Calu3 (cell line): ENCODE measurements at regions of chr10 and their contacts with region 1.

Region 1: DNA sequence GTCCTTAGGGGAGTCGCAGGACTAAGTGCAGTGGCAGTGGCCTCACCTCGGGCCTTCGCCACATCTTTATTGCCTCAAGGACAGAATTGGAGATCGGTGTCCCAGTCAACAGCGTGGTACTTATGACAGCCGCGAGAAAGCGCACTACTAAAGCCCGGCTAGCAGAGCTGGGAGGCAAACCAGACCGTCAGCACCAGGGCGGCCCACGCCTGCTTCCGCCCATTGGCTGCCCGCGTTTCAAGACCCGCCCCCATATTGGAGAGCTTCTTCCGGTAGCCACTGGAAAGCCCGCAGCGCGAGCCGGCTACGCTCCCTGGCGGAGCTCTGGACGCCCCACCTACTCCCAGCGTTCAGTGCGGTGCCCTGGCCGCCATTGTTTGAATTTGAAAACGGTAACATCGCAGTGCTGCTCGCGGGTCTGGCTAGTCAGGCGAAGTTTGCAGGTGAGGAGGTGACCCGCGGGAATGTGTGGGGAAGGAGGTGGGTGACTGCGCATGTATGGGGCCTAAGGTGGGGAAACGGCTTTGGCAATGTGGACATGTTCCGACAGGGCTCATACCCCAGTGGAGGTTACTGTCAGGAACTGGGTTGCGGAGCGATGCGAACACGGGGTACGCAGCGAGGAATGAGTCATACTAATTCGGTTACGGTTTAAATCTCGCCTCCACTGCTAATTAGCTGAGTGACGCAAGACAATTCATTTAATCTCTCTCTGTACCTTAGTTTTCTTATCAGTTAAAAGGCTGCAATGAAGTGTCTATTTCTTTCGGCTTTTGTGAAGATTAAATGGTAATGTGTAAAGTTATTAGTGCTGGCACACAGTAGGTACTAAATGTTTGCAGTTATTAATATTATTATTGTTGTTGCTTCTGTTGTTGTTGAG is at the start of gene KIF20B:
- DNase-seq: peak; percentile 92
- H3K4me3 Mint-ChIP-seq: peak within 1 kb of the TSS; percentile 94
- H3K27ac Mint-ChIP-seq: peak within 1 kb of the TSS; percentile 95
- H3K4me1 Mint-ChIP-seq: peaks cover 24% of the 10 kb centered on the region
- H3K27me3 Mint-ChIP-seq: no peaks in the 10 kb centered on the region
- CTCF ChIP-seq: no peak
- total RNA-seq, gene KIF20B: 38.4 and 39.9 TPM in 2 replicates

Region 2: GRCh38 chr10:89540420-89540949 is 161.0 kb before region 1 on chr10:
- CTCF ChIA-PET with region 1: no interaction called
- intact Hi-C with region 1: no loop called
- DNase-seq: no peak
- H3K4me3 Mint-ChIP-seq: no peak overlapping the region
- H3K27ac Mint-ChIP-seq: no peak overlapping the region
- H3K4me1 Mint-ChIP-seq: no peaks in the 10 kb centered on the region
- H3K27me3 Mint-ChIP-seq: peaks cover 9% of the 10 kb centered on the region
- CTCF ChIP-seq: no peak

Region 3: DNA sequence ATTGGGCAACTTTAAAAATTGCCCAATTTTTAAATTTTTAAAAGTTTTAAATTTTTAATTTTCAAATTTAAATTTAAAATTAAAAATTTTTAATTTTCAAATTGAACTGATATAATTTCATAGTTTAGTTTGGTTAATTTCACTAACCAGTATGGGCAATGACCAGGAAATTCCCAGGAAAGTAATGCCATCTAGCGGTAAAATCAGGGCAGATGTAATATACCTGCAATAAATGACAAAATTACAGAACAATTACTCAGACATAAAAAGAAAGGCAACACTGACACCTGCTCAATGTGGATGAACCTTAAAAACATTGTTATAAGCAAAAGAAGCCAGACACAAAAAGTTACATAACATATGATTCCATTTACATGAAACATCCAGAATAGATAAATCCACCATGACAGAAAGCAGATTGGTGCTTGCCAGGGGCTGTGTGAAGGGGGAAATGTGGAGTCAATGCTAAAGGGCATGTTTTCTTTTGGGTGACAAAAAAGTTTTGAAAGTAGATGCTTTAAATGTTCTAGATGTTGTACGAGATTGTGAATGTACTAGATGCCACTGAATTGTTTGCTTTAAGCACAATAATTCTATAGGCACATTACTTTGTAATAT is 137.5 kb before region 1 on chr10:
- CTCF ChIA-PET with region 1: no interaction called
- intact Hi-C with region 1: loop called (anchors 5 kb)
- DNase-seq: peak; percentile 26
- H3K4me3 Mint-ChIP-seq: no peak overlapping the region
- H3K27ac Mint-ChIP-seq: no peak overlapping the region
- H3K4me1 Mint-ChIP-seq: no peaks in the 10 kb centered on the region
- H3K27me3 Mint-ChIP-seq: no peaks in the 10 kb centered on the region
- CTCF ChIP-seq: peak; percentile 18

Region 4: DNA sequence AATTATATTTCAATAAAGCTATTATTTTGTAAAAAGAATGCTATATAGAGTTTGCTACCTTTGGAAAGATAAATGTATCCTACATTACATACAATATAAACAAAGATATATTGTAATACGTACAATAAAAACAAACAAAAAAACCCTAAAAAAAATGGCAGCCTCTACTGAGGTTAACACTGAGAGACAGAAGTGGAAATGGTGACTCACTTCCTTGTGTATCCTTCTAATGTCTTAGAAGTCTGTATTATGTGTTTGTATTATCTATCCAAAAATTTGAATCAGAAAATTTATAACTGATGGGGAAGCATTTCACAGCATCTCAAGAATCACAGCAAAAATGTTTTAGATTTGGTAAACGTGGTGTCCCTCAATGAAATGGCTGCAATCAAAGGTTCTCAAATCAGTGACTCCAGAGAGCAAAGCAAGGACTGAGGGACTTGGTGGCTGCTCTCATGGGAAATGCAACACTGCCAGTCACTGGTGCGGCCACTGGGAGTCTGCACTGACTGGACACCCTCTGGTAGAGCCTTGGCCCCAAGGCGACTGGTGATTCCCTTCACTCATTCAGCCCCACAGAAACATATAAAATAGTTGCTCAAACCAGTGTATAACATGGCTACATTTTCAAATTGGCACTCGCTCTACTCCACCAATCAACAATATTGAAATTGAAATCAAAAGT is 110.2 kb before region 1 on chr10:
- CTCF ChIA-PET with region 1: no interaction called
- intact Hi-C with region 1: no loop called
- DNase-seq: no peak
- H3K4me3 Mint-ChIP-seq: no peak overlapping the region
- H3K27ac Mint-ChIP-seq: no peak overlapping the region
- H3K4me1 Mint-ChIP-seq: no peaks in the 10 kb centered on the region
- H3K27me3 Mint-ChIP-seq: no peaks in the 10 kb centered on the region
- CTCF ChIP-seq: no peak

Region 5: GRCh38 chr10:89633484-89633883 is 68.0 kb before region 1 on chr10:
- CTCF ChIA-PET with region 1: interaction called, 4 read pairs
- intact Hi-C with region 1: loop called (anchors 5 kb)
- DNase-seq: peak; percentile 31
- H3K4me3 Mint-ChIP-seq: peak overlapping the region; percentile 42
- H3K27ac Mint-ChIP-seq: peak overlapping the region; percentile 20
- H3K4me1 Mint-ChIP-seq: peaks cover 16% of the 10 kb centered on the region
- H3K27me3 Mint-ChIP-seq: no peaks in the 10 kb centered on the region
- CTCF ChIP-seq: no peak

Region 6: DNA sequence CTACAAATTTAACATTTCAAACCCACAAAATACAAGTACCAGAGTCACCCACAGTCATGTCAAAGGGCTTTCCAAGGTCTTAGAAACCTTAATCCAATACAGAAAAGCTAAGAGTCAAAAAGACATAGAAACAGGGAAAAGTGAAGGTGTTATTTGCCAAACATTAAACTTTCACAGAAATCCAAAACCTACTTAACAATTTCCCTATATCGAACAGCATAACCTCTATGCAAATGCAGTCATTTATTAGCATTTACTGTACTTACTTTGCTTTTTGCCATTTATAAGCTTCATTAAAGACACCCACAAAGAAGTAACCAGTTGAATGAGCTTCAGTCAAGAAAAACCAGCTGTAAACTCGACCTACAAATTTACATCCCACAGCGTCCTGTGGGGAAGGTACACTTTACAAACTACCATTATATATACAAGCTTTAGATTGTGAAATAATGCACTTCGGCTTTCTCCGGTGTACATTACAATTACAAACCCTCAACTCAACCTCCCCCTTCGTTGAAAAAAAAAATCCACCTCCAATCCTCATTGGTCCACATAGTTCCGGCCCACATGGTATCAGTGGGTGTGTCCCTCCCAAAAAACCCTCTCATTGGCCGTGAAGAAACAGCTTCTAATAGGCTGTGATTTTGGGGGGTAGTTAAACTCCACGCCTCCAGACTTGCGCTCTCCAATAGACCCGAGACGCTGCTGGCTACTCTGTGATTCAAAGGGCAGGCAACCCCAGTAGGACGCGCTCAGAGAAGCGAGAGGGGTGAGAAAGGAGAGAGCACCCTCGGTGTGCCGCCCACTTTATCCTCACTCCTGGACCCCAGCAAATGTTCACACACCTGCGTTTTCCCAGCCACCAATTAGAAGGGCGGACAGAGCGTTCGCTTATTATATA is 57.8 kb before region 1 on chr10:
- CTCF ChIA-PET with region 1: interaction called, 6 read pairs
- intact Hi-C with region 1: loop called (anchors 2 kb)
- DNase-seq: peak; percentile 73
- H3K4me3 Mint-ChIP-seq: no peak overlapping the region
- H3K27ac Mint-ChIP-seq: no peak overlapping the region
- H3K4me1 Mint-ChIP-seq: peaks cover 19% of the 10 kb centered on the region
- H3K27me3 Mint-ChIP-seq: no peaks in the 10 kb centered on the region
- CTCF ChIP-seq: no peak

Region 7: DNA sequence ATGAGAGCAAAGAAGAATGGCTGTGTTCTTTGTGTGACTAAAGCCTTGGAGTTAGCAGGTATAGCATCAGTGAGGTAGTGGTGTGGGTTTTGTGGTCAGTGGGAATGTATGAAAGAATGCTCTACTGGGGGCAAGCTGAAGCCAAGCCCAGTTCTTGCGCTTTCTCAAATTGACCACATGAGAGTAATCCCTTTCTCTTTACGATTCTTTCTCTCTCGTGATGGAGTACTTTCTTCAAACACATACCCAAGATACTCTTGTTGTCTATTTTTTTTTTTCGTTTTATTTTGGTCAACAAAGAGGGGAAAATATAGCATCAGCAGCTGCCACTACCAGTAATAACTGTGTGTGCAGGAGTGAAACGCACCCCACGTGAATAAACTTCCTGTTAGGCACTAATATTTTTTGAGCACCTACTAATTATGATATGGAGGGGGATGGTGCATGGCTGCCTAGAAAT is 48.0 kb before region 1 on chr10:
- CTCF ChIA-PET with region 1: no interaction called
- intact Hi-C with region 1: loop called (anchors 2 kb)
- DNase-seq: peak; percentile 62
- H3K4me3 Mint-ChIP-seq: peak overlapping the region; percentile 52
- H3K27ac Mint-ChIP-seq: peak overlapping the region; percentile 48
- H3K4me1 Mint-ChIP-seq: peaks cover 16% of the 10 kb centered on the region
- H3K27me3 Mint-ChIP-seq: no peaks in the 10 kb centered on the region
- CTCF ChIP-seq: no peak